H1 (cell line): ENCODE measurements at regions of chr7 and their contacts with region 1.

Region 1: GRCh38 chr7:54839538-54840213 is 80.7 kb upstream of the SEC61G start:
- DNase-seq: peak; percentile 39 to 85
- H3K4me3 ChIP-seq: no peak overlapping the region
- H3K27ac ChIP-seq: no peak overlapping the region
- H3K4me1 ChIP-seq: peaks cover 0 to 3% (median 0%) of the 10 kb centered on the region in 4 experiments; a peak in 1 of 7 replicates
- H3K27me3 ChIP-seq: no peaks in the 10 kb centered on the region; a peak in 1 of 7 replicates
- CTCF ChIP-seq: peak; percentile 93 to 94 (median 93)
- EP300 ChIP-seq: no peak
- POLR2A ChIP-seq: no peak
- RAD21 ChIP-seq: peak; percentile 90 to 93

Region 2: GRCh38 chr7:54773472-54774399 is 65.9 kb before region 1 on chr7:
- CTCF ChIA-PET with region 1: interaction called, 48 read pairs
- POLR2A ChIA-PET with region 1: no interaction called
- DNase-seq: peak; percentile 81 to 91
- H3K4me3 ChIP-seq: peak overlapping the region in 1 of 4 experiments; percentile 7; a peak in 1 of 8 replicates
- H3K27ac ChIP-seq: no peak overlapping the region
- H3K4me1 ChIP-seq: no peaks in the 10 kb centered on the region
- H3K27me3 ChIP-seq: no peaks in the 10 kb centered on the region
- CTCF ChIP-seq: peak; percentile 85 to 94 (median 89)
- EP300 ChIP-seq: no peak
- POLR2A ChIP-seq: no peak
- RAD21 ChIP-seq: peak; percentile 97 to 98

Region 3: DNA sequence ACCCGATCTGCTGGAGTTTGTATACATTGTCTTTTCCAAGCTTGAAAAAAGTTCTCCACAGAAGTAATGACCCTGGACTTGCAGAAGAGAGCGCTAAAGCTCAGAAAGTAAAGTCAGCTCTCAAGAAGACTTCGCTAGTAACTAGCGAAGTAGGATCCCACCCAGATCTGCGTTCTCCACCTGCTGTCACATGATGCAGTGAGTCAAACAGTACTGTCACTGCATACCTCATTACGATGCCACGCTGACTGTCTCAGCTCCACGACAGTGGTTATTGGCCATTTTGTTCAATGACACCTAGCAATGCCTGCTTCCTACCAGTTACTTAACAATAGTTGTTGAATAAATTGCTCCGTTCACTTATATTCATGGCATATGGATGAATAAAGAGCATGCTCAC is 51.0 kb before region 1 on chr7:
- CTCF ChIA-PET with region 1: interaction called, 34 read pairs
- POLR2A ChIA-PET with region 1: no interaction called
- DNase-seq: peak in 1 of 2 experiments; percentile 47
- H3K4me3 ChIP-seq: no peak overlapping the region
- H3K27ac ChIP-seq: no peak overlapping the region
- H3K4me1 ChIP-seq: 0 out of 7 replicates have a peak, but pooled peaks cover 0 to 2% (median 0%) of the 10 kb centered on the region in 4 experiments
- H3K27me3 ChIP-seq: no peaks in the 10 kb centered on the region; a peak in 2 of 7 replicates
- CTCF ChIP-seq: peak in 2 of 3 experiments; percentile 69 to 79; a peak in 3 of 4 replicates
- EP300 ChIP-seq: no peak
- POLR2A ChIP-seq: no peak
- RAD21 ChIP-seq: peak; percentile 90 to 91

Region 4: DNA sequence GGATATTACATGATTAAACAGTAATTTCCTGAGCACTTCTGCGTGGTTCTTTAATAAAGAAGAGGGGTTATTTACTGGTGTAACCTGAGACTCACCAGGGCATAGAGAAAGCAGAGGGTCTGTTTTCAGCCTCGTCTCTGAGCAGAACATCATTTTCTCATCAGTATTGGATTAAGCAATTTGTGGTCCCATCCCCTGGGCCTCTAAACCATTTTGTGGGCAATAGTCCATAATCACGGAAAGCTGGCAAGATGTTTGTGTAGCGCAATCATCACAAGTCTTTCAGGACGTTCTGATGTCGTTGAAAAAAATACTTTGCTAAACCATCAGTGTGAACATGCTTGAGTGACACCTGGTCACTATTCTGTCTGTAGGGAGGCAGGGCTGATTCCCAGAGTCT is 43.5 kb before region 1 on chr7:
- CTCF ChIA-PET with region 1: interaction called, 34 read pairs
- POLR2A ChIA-PET with region 1: no interaction called
- DNase-seq: no peak
- H3K4me3 ChIP-seq: no peak overlapping the region
- H3K27ac ChIP-seq: no peak overlapping the region
- H3K4me1 ChIP-seq: no peaks in the 10 kb centered on the region
- H3K27me3 ChIP-seq: no peaks in the 10 kb centered on the region
- CTCF ChIP-seq: no peak
- EP300 ChIP-seq: no peak
- POLR2A ChIP-seq: no peak
- RAD21 ChIP-seq: no peak

Region 5: DNA sequence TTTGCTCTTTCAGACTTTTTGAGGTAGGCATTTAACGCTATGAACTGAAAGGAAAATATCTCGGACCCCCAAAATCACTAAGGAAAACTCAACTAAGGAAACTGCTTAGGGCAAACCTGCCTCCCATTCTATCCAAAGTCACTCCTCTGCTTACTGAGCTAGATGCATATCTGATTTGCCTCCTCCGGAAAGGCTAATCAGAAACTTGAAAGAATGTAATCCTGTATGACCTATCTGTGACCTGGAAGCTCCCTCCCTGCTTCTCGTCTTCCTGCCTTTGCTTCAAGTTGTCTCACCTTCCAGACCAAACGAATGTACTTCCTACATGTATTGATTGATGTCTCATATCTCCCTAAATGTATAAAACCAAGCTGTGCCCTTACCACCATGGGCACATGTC is 22.6 kb before region 1 on chr7:
- CTCF ChIA-PET with region 1: interaction called, 15 read pairs
- POLR2A ChIA-PET with region 1: no interaction called
- DNase-seq: no peak
- H3K4me3 ChIP-seq: no peak overlapping the region
- H3K27ac ChIP-seq: no peak overlapping the region
- H3K4me1 ChIP-seq: no peaks in the 10 kb centered on the region; a peak in 1 of 7 replicates
- H3K27me3 ChIP-seq: no peaks in the 10 kb centered on the region
- CTCF ChIP-seq: no peak
- EP300 ChIP-seq: no peak
- POLR2A ChIP-seq: no peak
- RAD21 ChIP-seq: no peak

Region 6: GRCh38 chr7:54858008-54858692 is 18.5 kb after region 1 on chr7:
- CTCF ChIA-PET with region 1: interaction called, 22 read pairs
- POLR2A ChIA-PET with region 1: no interaction called
- DNase-seq: no peak
- H3K4me3 ChIP-seq: no peak overlapping the region
- H3K27ac ChIP-seq: no peak overlapping the region
- H3K4me1 ChIP-seq: peaks cover 0 to 4% (median 3%) of the 10 kb centered on the region in 4 experiments; a peak in 4 of 7 replicates
- H3K27me3 ChIP-seq: no peaks in the 10 kb centered on the region
- CTCF ChIP-seq: no peak
- EP300 ChIP-seq: no peak
- POLR2A ChIP-seq: no peak
- RAD21 ChIP-seq: no peak